ENCODE measurements at regions of chr14 and their contacts with region 1.

Region 1: GRCh38 chr14:87643005-87643404 is 350.0 kb downstream of the GALC start:
- DNase-seq: no peak
- H3K4me3 ChIP-seq: no peak overlapping the region
- H3K27ac ChIP-seq: no peak overlapping the region
- H3K4me1 ChIP-seq: no peaks in the 10 kb centered on the region
- H3K27me3 ChIP-seq: no peaks in the 10 kb centered on the region
- CTCF ChIP-seq: no peak
- POLR2A ChIP-seq: no peak

Region 2: GRCh38 chr14:89252887-89253547 is 1610.0 kb after region 1 on chr14:
- intact Hi-C with region 1: loop called (anchors 5 kb)
- DNase-seq: no peak
- H3K4me3 ChIP-seq: no peak overlapping the region
- H3K27ac ChIP-seq: no peak overlapping the region
- H3K4me1 ChIP-seq: peaks cover 48% of the 10 kb centered on the region
- H3K27me3 ChIP-seq: no peaks in the 10 kb centered on the region
- CTCF ChIP-seq: no peak
- POLR2A ChIP-seq: no peak

Measured in vagina (tissue), 2 donors.